ENCODE measurements at regions of chr9 and their contacts with region 1.

Region 1: GRCh38 chr9:120842690-120843499 is at the start of gene PSMD5:
- DNase-seq: peak; percentile 98
- H3K4me3 Mint-ChIP-seq: peak within 1 kb of the TSS; percentile 98
- H3K27ac Mint-ChIP-seq: peak within 1 kb of the TSS; percentile 94
- H3K4me1 Mint-ChIP-seq: peaks cover 66% of the 10 kb centered on the region
- H3K27me3 Mint-ChIP-seq: no peaks in the 10 kb centered on the region
- total RNA-seq, gene PSMD5: 61.8 and 67.9 TPM in 2 replicates

Region 2: DNA sequence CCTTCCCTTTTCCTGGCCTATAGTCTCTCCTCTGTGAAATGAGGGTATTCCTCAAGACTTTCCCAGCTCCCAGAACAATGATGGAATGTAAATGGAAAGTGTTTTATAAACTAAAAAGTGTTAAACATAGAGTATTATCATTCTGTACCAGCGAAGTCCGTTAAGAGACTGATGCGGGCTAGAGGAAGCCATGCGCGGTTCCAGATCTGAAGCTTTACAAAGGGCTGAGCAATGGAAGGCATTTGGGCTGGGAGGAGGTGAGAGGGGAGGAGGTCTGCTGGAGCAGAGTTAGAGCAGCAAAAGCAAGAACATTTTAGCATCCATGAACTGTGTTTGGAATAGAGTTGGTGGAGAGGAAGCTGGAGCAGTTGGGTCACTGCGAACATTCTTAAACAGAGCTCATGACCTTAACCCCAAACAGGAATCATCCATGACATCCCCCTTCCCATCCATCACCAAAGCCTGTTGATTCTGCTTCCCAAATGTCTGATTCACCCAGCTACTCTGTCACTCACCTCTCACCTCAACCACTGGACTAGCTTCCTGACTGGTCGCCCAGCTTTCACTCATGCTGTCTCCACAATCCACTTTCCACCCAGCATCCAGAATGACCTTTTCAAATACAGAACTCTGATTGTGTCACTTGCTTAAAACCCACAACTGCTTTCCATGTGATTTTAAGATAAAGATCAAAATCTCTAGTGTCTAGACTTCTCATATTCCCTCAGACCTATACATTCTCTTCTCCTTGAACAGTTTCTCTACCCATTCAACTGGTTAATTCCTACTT is 300.0 kb before region 1 on chr9:
- intact Hi-C with region 1: no loop called
- DNase-seq: no peak
- H3K4me3 Mint-ChIP-seq: no peak overlapping the region
- H3K27ac Mint-ChIP-seq: peak overlapping the region; percentile 30
- H3K4me1 Mint-ChIP-seq: peaks cover 5% of the 10 kb centered on the region
- H3K27me3 Mint-ChIP-seq: no peaks in the 10 kb centered on the region

Region 3: DNA sequence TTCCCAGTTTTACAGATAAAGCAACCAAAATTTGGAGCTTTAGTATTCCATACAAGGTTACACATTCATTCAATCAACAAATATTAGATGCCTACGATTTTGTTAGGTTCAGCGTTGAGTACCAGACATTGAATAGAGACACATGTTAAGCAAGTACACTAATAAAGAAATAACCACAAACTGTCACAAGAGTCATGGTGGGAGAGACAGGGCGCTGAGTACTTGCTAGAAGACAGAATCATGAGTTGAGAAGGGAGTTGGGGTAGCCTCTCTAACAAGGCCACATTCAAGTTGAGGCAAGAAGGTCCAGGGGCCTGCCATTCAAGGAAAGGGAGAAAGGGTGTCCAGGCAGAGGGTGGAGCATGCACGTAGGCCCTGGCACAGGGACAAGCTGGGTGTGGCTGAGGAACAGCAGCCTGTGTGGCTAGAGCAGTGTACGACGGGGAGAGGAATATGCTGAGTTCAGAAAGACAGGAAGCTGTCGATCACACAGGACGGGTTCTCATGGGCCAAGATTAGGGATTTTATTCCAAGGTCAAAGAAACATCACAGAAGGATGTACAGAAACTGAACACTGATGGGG is 279.9 kb before region 1 on chr9:
- intact Hi-C with region 1: no loop called
- DNase-seq: no peak
- H3K4me3 Mint-ChIP-seq: no peak overlapping the region
- H3K27ac Mint-ChIP-seq: no peak overlapping the region
- H3K4me1 Mint-ChIP-seq: peaks cover 10% of the 10 kb centered on the region
- H3K27me3 Mint-ChIP-seq: no peaks in the 10 kb centered on the region

Region 4: GRCh38 chr9:120730661-120731514 is 112.0 kb before region 1 on chr9:
- intact Hi-C with region 1: no loop called
- DNase-seq: no peak
- H3K4me3 Mint-ChIP-seq: no peak overlapping the region
- H3K27ac Mint-ChIP-seq: no peak overlapping the region
- H3K4me1 Mint-ChIP-seq: peaks cover 10% of the 10 kb centered on the region
- H3K27me3 Mint-ChIP-seq: no peaks in the 10 kb centered on the region

Region 5: DNA sequence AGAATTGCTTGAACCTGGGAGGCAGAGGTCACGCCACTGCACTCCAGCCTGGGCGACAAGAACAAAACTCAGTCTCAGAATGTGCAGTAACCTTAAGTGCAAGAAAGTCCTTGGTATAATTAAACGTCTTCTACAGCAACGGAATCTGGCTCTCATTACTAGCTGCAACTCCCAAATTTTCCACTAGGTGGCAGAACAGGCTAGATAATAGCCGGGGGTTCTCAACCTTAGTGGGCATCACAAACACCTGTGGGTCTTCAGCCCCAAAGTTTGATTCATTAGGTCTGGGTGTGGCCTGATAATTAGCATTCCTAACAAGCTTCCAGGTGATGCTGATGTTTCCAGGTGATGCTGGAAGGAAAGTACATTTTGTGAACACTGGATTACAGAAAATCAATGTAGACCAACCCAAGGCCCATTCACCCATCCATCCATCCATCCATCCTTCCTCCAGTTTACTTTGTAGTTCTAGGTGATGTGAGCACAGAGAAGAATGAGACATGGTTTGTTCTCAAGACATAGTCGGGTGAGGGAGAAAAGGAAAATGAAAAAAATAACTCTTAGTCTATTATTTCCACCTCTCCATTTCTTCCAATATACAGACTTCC is 87.0 kb before region 1 on chr9:
- intact Hi-C with region 1: loop called (anchors 5 kb)
- DNase-seq: peak; percentile 50
- H3K4me3 Mint-ChIP-seq: no peak overlapping the region
- H3K27ac Mint-ChIP-seq: no peak overlapping the region
- H3K4me1 Mint-ChIP-seq: peaks cover 10% of the 10 kb centered on the region
- H3K27me3 Mint-ChIP-seq: no peaks in the 10 kb centered on the region

Region 6: GRCh38 chr9:120868676-120869359 is 25.9 kb after region 1 on chr9:
- intact Hi-C with region 1: loop called (anchors 1 kb)
- DNase-seq: peak; percentile 93
- H3K4me3 Mint-ChIP-seq: peak overlapping the region; percentile 82
- H3K27ac Mint-ChIP-seq: peak overlapping the region; percentile 91
- H3K4me1 Mint-ChIP-seq: peaks cover 45% of the 10 kb centered on the region
- H3K27me3 Mint-ChIP-seq: no peaks in the 10 kb centered on the region

Region 7: GRCh38 chr9:120892748-120893610 is 50.1 kb after region 1 on chr9:
- intact Hi-C with region 1: loop called (anchors 1 kb)
- DNase-seq: peak; percentile 66
- H3K4me3 Mint-ChIP-seq: peak overlapping the region; percentile 71
- H3K27ac Mint-ChIP-seq: peak overlapping the region; percentile 100
- H3K4me1 Mint-ChIP-seq: peaks cover 75% of the 10 kb centered on the region
- H3K27me3 Mint-ChIP-seq: no peaks in the 10 kb centered on the region

Region 8: GRCh38 chr9:120936011-120936763 is 93.3 kb after region 1 on chr9:
- intact Hi-C with region 1: loop called (anchors 1 kb)
- DNase-seq: peak; percentile 75
- H3K4me3 Mint-ChIP-seq: peak overlapping the region; percentile 52
- H3K27ac Mint-ChIP-seq: peak overlapping the region; percentile 80
- H3K4me1 Mint-ChIP-seq: peaks cover 55% of the 10 kb centered on the region
- H3K27me3 Mint-ChIP-seq: peaks cover 2% of the 10 kb centered on the region

Region 9: DNA sequence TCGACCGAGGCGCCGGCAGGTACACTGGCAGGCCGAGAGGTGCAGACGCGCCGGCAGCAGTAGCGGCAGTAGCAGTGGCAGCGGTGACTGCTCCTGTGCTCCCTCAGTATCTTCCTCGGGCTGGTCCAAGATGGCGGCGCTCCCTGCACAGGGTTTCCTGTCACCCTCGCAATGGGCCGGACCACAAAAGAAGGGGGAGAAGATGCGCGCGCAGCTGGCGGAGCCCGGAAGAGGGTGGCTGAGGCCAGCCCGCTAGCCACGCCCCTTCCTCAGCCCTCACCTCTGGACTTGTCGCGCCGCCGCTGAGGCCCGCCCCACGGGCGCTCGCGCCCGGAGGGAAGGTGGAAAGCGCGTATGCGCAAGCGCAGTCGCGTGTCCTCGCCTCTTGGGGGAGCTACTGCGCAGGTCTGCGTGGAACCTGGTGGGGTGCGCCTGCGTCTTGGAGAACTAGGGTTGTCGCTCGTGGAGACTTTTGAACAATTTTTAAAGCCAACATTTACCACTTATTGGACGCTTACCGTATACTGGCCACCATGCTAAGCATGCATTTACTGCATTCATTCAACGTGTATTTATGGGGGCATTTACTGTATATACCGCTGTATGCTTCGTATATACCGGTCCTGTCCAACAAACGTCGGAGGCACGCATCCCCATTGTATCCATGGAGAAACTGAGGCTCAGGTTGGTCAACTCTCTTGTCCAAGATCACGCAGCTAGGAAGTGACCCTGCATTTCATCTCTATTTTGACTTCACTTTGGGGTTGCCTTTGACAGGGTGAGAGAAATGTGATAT is 359.0 kb after region 1 on chr9 and contains the start of gene RAB14:
- intact Hi-C with region 1: loop called (anchors 10 kb)
- DNase-seq: peak; percentile 100
- H3K4me3 Mint-ChIP-seq: peak within 1 kb of the TSS; percentile 96
- H3K27ac Mint-ChIP-seq: peak within 1 kb of the TSS; percentile 87
- H3K4me1 Mint-ChIP-seq: peaks cover 46% of the 10 kb centered on the region
- H3K27me3 Mint-ChIP-seq: no peaks in the 10 kb centered on the region
- total RNA-seq, gene RAB14: 62.0 and 63.2 TPM in 2 replicates

Measured in activated T-helper 2 cell treated with anti-CD3 and anti-CD28 coated beads, Interferon-gamma antibody, Interleukin-2, Interleukin-4, amounts not matched to agents 10 μg/mL and 5 μg/mL and 100 μg/mL, durations not matched to agents 14 hours and 24 hours and 36 hours (primary cell).